BJ (cell line): ENCODE measurements at regions of chr4 and their contacts with region 1.

Region 1: GRCh38 chr4:108570993-108571569 is 49.3 kb upstream of the RPL34 start:
- DNase-seq: no peak
- H3K4me3 ChIP-seq: no peak overlapping the region
- H3K27me3 ChIP-seq: 0 out of 2 replicates have a peak, but pooled peaks cover 2% of the 10 kb centered on the region
- CTCF ChIP-seq: no peak

Region 2: DNA sequence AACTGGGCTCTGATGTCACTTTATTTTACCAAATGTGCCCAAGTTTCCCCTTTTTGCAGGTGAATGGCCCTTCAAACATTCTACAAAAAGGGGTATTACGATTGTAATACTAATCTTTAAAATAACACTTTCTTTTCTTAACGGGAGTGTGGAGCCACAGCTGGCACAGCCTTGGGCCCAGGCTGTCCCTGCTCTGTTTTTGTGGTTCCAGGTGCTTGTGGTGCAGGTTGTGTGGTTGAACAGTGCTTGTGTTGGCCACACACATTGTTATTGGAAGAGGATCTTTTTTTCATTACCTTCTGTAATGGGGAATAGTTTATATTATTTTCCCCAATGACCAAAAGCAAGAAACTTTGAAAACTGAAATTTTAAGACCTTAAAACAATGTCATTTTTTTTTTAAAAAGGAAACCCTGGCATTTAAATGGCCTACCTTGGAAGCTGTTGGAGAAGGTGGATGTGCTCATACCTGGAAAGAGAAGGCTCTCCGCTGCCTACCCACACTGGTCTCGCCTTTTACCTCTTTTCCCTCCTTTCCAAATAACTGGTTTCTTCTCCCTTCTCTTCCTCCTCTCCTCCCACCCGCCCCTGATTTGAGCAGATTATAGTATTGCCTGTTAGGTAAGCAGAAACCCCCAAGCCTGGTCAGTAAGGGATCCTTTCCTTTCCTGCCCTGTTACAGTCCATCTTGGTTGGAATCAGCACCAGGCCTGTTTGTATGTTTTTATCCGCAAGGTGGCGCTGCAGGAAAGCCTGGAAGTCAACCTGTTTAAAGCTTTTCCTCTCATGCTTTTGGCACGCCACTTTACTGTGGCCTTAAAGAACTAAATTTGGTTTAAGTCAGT is 552.8 kb before region 1 on chr4:
- CTCF ChIA-PET with region 1: interaction called, 53 read pairs
- POLR2A ChIA-PET with region 1: interaction called, 7 read pairs
- DNase-seq: peak; percentile 18
- H3K4me3 ChIP-seq: no peak overlapping the region
- H3K27me3 ChIP-seq: no peaks in the 10 kb centered on the region
- CTCF ChIP-seq: peak; percentile 82

Region 3: GRCh38 chr4:108060164-108060563 is 510.9 kb before region 1 on chr4:
- CTCF ChIA-PET with region 1: interaction called, 29 read pairs
- POLR2A ChIA-PET with region 1: no interaction called
- DNase-seq: no peak
- H3K4me3 ChIP-seq: no peak overlapping the region
- H3K27me3 ChIP-seq: no peaks in the 10 kb centered on the region
- CTCF ChIP-seq: no peak

Region 4: GRCh38 chr4:108465886-108466500 is 105.1 kb before region 1 on chr4:
- CTCF ChIA-PET with region 1: no interaction called
- POLR2A ChIA-PET with region 1: no interaction called
- DNase-seq: no peak
- H3K4me3 ChIP-seq: no peak overlapping the region
- H3K27me3 ChIP-seq: peaks cover 2% of the 10 kb centered on the region; the same call in 1 of the 2 replicates
- CTCF ChIP-seq: no peak

Region 5: GRCh38 chr4:108581083-108581482 is 10.0 kb after region 1 on chr4:
- CTCF ChIA-PET with region 1: interaction called, 23 read pairs
- POLR2A ChIA-PET with region 1: no interaction called
- DNase-seq: no peak
- H3K4me3 ChIP-seq: no peak overlapping the region
- H3K27me3 ChIP-seq: no peaks in the 10 kb centered on the region
- CTCF ChIP-seq: no peak

Region 6: DNA sequence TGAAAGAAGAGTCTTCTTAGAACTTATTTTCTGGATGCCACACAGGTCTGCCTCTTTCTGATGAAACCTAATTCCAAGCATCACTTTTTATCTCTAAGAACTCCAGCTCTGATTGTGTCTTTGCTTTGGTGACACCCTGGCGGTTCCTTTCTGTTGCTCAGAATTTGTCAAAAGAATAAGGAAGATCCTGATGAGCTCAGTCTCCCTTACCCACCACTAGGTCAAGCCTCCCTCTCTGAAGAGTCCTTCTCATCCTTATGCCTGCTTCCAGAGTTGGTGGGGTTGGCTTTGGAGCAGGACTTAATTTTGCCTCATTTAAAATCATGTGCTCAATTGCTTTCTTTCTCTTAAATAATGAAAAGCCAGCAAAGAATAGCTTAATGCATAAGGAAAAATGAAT is 17.8 kb after region 1 on chr4:
- CTCF ChIA-PET with region 1: interaction called, 11 read pairs
- POLR2A ChIA-PET with region 1: no interaction called
- DNase-seq: no peak
- H3K4me3 ChIP-seq: no peak overlapping the region
- H3K27me3 ChIP-seq: no peaks in the 10 kb centered on the region
- CTCF ChIP-seq: no peak